ENCODE measurements at regions of chr9 and their contacts with region 1.

Region 1: GRCh38 chr9:86500667-86501435 is 146.6 kb upstream of the TUT7 start:
- DNase-seq: no peak
- H3K4me3 ChIP-seq: no peak overlapping the region
- H3K4me3 Mint-ChIP-seq: no peak overlapping the region
- H3K27ac Mint-ChIP-seq: no peak overlapping the region
- H3K4me1 ChIP-seq: no peaks in the 10 kb centered on the region
- H3K4me1 Mint-ChIP-seq: no peaks in the 10 kb centered on the region
- H3K27me3 ChIP-seq: no peaks in the 10 kb centered on the region
- H3K27me3 Mint-ChIP-seq: peaks cover 3% of the 10 kb centered on the region
- CTCF ChIP-seq: no peak

Region 2: DNA sequence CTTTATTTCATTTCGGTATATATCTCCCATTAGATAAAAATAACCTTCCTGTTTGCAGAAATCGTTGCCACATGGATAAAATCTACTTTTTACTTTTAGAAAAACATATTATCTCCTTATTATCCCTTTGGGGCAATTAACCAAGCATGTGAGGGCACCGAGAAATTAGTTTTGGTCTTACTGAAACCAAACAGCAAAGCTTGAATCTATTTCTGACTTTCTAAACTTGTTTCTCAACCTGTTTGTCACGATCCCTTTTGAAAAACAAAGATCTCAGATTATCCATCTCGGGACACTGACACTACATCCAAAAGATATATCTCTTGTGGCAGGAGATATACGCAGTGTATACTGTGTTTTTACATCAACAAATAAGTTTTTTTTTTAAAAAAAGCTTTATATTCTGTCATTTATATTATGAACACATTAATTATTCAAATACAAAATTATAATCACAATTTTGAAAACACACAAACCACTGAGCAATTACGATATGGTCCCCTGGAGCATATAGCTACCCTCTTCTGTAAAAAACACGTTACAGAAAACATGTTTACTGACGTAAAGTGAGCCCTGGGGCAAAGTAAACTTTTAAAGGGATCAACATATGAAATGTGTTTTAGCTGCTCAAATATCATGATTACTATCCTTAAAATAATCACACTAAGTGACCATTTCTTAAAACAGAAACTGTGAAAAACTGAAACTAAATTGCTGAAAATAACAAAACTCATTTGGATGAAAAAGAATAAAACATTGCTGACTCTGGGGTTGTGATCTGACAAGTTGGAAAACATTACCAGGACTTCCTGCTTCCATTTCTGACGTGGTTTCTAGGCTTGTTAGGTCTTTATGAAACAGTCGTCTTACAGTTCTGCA is 148.7 kb before region 1 on chr9:
- CTCF ChIA-PET with region 1: no interaction called
- POLR2A ChIA-PET with region 1: no interaction called
- intact Hi-C with region 1: no loop called
- DNase-seq: no peak
- H3K4me3 ChIP-seq: no peak overlapping the region
- H3K4me3 Mint-ChIP-seq: peak overlapping the region; percentile 16
- H3K27ac Mint-ChIP-seq: no peak overlapping the region
- H3K4me1 ChIP-seq: peaks cover 6% of the 10 kb centered on the region; the same call in 1 of the 2 replicates
- H3K4me1 Mint-ChIP-seq: no peaks in the 10 kb centered on the region
- H3K27me3 ChIP-seq: no peaks in the 10 kb centered on the region
- H3K27me3 Mint-ChIP-seq: no peaks in the 10 kb centered on the region
- CTCF ChIP-seq: no peak

Region 3: DNA sequence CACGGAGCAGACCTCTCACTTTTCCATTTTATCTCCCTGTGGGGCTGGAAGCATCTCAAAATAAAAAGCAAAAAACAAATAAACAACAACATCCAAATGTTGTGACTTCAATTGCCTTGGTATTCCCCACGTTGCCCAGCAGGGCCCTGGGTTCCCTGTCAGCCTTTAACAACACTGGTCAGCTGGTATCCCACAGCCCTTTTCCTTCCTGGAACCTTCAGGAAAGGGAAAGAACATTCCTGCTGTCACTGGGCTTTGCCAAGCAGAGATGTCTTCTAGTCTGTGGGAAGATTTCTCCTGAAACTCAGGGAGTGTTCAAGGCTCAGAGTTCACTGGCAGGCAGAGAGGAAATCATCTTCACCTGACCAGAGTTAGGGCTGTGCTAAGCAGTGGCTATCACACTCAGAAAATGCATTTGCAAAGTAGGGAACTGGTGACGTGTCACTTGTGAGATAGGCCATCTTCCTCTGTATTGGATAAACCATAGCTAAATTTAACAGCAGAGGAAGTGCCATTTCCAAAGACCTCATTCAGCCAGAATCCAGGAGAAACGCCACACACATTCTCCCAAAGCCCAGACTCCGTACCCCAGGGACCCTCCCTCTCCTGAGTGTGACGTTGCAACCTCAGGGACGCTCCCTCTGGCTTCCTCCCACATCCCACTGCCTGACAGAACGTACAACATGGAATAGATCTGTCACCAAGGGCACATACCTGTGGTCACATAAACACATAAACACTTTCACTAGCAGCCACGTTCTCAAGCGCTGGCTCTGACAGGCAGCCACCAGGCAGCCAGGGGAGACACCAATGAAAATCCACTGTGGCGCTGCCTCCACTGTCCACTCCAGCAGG is 722.8 kb after region 1 on chr9:
- CTCF ChIA-PET with region 1: no interaction called
- POLR2A ChIA-PET with region 1: interaction called, 11 read pairs
- intact Hi-C with region 1: no loop called
- DNase-seq: no peak
- H3K4me3 ChIP-seq: no peak overlapping the region
- H3K4me3 Mint-ChIP-seq: no peak overlapping the region
- H3K27ac Mint-ChIP-seq: no peak overlapping the region
- H3K4me1 ChIP-seq: no peaks in the 10 kb centered on the region
- H3K4me1 Mint-ChIP-seq: no peaks in the 10 kb centered on the region
- H3K27me3 ChIP-seq: no peaks in the 10 kb centered on the region; the same call in 1 of the 2 replicates
- H3K27me3 Mint-ChIP-seq: peaks cover 5% of the 10 kb centered on the region
- CTCF ChIP-seq: no peak